SK-N-SH (cell line): ENCODE measurements at regions of chr1 and their contacts with region 1.

Region 1: GRCh38 chr1:223556414-223557129 is 108.9 kb downstream of the CAPN8 start:
- DNase-seq: peak; percentile 44
- H3K4me3 ChIP-seq: peak overlapping the region in 1 of 2 experiments; percentile 19; a peak in 1 of 4 replicates
- H3K27ac ChIP-seq: no peak overlapping the region
- H3K4me1 ChIP-seq: no peaks in the 10 kb centered on the region
- H3K27me3 ChIP-seq: no peaks in the 10 kb centered on the region
- CTCF ChIP-seq: peak; percentile 52
- EP300 ChIP-seq: no peak
- RAD21 ChIP-seq: peak; percentile 59

Region 2: DNA sequence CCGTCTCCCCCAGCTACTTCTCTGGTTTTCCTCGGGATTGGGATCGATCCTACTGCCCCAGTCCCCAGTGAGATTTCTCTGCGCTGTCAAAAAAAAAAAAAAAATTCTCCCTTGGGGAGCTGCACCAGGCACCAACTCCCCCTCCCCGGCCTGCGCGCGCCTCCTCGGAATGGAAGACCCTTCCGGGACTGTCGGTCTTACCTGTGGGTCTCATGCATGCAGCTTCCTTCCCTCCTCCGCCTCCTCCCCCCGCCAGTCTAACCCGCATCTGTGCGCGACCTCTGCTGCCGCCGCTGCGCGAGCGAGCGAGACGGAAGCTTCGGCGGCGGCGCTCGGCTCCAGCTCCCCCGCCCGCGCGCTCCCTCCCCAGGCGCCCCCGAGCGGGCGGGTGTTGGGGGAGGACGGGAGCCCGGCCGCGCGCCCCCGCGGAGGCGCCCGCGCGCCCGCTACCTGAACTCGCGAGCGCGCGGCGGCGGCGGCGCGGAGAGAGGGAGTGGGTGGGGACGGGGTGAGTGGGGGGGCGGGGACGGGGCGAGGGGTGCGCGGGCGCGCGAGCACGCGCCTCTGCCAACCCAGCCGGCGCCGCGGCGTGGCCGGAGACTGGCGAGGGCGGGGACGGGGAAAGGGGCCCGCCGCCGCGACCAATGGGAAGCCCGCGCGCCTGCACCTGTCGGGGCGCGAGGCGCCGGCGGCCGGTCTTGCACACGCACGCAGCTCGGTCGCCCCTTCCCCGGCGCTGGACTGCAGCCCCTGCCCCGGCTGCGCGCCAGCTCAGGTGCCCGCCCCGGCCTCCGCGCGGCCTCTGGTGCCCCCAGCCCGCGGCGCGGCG is 192.5 kb before region 1 on chr1 and contains the start of gene SUSD4:
- CTCF ChIA-PET with region 1: no interaction called
- POLR2A ChIA-PET with region 1: no interaction called
- DNase-seq: peak; percentile 88
- H3K4me3 ChIP-seq: peak within 1 kb of the TSS; percentile 51 to 54
- H3K27ac ChIP-seq: no peak within 1 kb of the TSS
- H3K4me1 ChIP-seq: peaks cover 0 to 9% of the 10 kb centered on the region in 2 experiments; a peak in 1 of 4 replicates
- H3K27me3 ChIP-seq: peaks cover 45% of the 10 kb centered on the region
- CTCF ChIP-seq: no peak
- EP300 ChIP-seq: no peak
- RAD21 ChIP-seq: no peak
- polyA plus RNA-seq, gene SUSD4: 0.21 and 0.31 TPM in 2 replicates

Region 3: GRCh38 chr1:223492044-223492443 is 64.5 kb before region 1 on chr1:
- CTCF ChIA-PET with region 1: no interaction called
- POLR2A ChIA-PET with region 1: no interaction called
- DNase-seq: no peak
- H3K4me3 ChIP-seq: no peak overlapping the region
- H3K27ac ChIP-seq: no peak overlapping the region
- H3K4me1 ChIP-seq: no peaks in the 10 kb centered on the region
- H3K27me3 ChIP-seq: peaks cover 15% of the 10 kb centered on the region
- CTCF ChIP-seq: no peak
- EP300 ChIP-seq: no peak
- RAD21 ChIP-seq: no peak

Region 4: DNA sequence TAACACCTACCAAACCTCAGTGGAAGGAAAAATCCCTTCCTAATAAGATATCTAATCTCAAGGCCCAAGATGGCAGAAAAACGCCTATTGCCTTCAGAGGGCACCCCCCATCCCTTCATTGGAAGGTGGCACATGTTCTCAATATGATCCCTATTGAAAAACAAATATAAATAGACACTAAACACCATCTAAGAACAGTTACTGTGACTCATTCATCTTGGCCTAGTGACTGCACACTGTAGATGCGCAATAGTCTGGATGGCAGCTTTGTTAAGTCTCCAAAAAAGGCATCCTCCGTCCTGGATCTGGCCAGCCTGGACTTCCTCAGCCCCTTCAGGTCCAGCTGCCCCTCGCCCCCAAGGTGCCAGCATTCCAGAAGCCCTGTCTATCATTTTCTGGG is 13.0 kb before region 1 on chr1:
- CTCF ChIA-PET with region 1: interaction called, 15 read pairs
- POLR2A ChIA-PET with region 1: no interaction called
- DNase-seq: no peak
- H3K4me3 ChIP-seq: no peak overlapping the region
- H3K27ac ChIP-seq: no peak overlapping the region
- H3K4me1 ChIP-seq: no peaks in the 10 kb centered on the region; a peak in 1 of 4 replicates
- H3K27me3 ChIP-seq: peaks cover 12% of the 10 kb centered on the region
- CTCF ChIP-seq: no peak
- EP300 ChIP-seq: no peak
- RAD21 ChIP-seq: no peak

Region 5: DNA sequence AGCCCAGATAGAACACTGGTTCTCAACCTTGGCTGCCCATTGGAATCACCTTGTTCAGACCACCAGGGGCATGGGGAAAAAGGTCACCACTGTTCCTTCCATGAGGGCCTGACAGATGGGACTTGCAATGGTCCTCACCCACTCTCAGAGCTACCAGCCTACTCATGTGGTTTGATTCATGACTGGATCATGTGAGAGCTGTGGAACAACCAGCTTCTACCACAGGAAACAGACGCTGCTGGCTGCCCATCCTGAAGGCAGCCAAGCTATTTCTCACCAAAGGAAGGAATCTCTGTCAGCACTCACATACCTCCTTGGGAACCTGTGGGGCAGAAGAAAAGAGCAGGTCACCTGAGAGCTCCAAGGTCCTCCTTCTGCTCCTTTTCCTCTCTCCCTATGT is 55.4 kb after region 1 on chr1:
- CTCF ChIA-PET with region 1: interaction called, 47 read pairs
- POLR2A ChIA-PET with region 1: no interaction called
- DNase-seq: no peak
- H3K4me3 ChIP-seq: no peak overlapping the region
- H3K27ac ChIP-seq: no peak overlapping the region
- H3K4me1 ChIP-seq: no peaks in the 10 kb centered on the region
- H3K27me3 ChIP-seq: no peaks in the 10 kb centered on the region
- CTCF ChIP-seq: no peak
- EP300 ChIP-seq: no peak
- RAD21 ChIP-seq: no peak

Region 6: DNA sequence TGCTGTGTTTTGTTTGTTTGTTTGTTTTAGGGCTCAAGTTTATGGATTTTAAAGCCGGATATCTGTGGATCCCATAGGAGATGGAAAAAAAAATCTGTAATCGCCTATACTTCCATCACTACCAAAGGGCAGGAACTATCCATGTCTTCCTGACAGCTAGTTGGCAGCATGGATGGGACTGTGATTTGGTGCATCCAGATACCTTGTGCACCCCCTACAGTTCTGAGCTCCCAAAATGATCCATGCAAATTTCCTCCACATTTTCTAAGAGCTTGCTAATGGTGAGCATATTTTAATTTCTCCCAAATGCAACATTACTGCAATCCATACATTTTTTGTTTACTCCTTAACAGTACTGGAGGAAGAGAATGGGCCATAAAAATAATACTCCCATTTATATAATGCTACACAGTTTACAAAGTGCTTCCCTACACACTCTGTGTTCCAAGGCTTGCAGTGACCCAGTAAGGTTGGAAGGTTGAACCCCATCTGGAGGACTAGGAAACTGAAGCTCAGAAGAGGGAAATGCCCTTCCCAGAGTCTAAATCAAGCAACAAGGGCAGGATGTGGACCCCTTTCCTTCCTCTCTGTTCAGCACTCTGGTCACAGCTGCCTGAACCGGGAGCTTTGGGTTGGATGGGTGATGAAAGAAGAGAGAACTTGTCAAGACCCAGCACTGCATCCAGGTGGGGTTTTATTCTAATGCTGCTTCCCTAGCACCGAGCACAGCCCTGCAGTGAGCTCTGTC is 60.9 kb after region 1 on chr1:
- CTCF ChIA-PET with region 1: interaction called, 47 read pairs
- POLR2A ChIA-PET with region 1: no interaction called
- DNase-seq: no peak
- H3K4me3 ChIP-seq: no peak overlapping the region
- H3K27ac ChIP-seq: no peak overlapping the region
- H3K4me1 ChIP-seq: peaks cover 0 to 7% of the 10 kb centered on the region in 2 experiments; a peak in 1 of 4 replicates
- H3K27me3 ChIP-seq: no peaks in the 10 kb centered on the region; the same call in 1 of the 2 replicates
- CTCF ChIP-seq: no peak
- EP300 ChIP-seq: no peak
- RAD21 ChIP-seq: no peak

Region 7: GRCh38 chr1:223670458-223671168 is 114.0 kb after region 1 on chr1:
- CTCF ChIA-PET with region 1: interaction called, 14 read pairs
- POLR2A ChIA-PET with region 1: no interaction called
- DNase-seq: peak; percentile 46
- H3K4me3 ChIP-seq: no peak overlapping the region
- H3K27ac ChIP-seq: no peak overlapping the region
- H3K4me1 ChIP-seq: no peaks in the 10 kb centered on the region
- H3K27me3 ChIP-seq: no peaks in the 10 kb centered on the region; the same call in 1 of the 2 replicates
- CTCF ChIP-seq: peak; percentile 53
- EP300 ChIP-seq: no peak
- RAD21 ChIP-seq: peak; percentile 54

Region 8: GRCh38 chr1:223683586-223684487 is 127.3 kb after region 1 on chr1:
- CTCF ChIA-PET with region 1: interaction called, 10 read pairs
- POLR2A ChIA-PET with region 1: no interaction called
- DNase-seq: peak; percentile 60
- H3K4me3 ChIP-seq: no peak overlapping the region; a peak in 1 of 4 replicates
- H3K27ac ChIP-seq: no peak overlapping the region
- H3K4me1 ChIP-seq: no peaks in the 10 kb centered on the region; a peak in 1 of 4 replicates
- H3K27me3 ChIP-seq: peaks cover 33% of the 10 kb centered on the region; the same call in 1 of the 2 replicates
- CTCF ChIP-seq: peak; percentile 73
- EP300 ChIP-seq: no peak
- RAD21 ChIP-seq: peak; percentile 94